ENCODE measurements at regions of chr1 and their contacts with region 1.

Region 1: DNA sequence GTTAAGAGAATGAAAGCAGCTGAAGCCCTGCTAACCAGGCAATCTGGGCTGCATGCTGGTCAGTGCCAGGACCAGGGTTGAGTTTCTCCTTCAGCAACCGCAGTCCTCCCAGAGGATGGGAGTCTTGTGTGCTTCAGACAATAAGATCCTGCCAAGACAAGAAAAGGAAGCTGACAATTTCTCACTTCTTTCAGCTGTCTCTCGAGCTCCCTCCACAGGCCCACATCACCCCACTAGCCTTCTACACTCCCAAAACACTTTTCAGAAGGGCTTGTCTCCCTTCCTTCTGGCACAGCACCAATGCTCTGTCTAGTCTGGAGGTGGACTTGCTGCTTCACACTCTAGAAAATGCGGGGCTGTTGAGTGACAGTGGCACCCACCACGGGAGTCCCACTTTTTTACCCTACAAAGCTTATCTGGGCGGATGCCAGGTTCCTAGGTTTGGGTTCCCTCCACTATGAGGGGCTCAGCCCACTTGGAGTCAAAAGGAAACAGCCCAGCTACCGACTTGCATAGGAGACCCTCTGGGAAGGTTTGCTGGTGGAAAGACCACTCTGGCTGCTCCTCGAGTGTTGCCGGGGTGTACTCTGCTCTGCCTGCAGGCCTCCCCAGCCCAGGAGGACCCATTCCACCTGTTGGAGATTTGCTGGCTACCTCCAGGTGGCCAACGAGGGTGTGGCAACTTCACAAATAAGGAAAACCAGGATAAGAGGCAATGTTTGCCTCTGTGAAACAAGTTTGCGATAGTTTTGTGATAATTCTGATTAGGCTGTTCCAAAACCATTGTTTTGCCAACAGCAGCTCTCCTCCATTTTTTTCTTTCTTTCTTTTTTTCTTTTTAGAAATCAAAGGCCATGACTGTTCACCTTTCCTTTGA is 68.9 kb downstream of the TENT5C start:
- DNase-seq: peak; percentile 41
- ATAC-seq: peak; percentile 80
- H3K4me3 Mint-ChIP-seq: no peak overlapping the region
- H3K27ac Mint-ChIP-seq: no peak overlapping the region
- H3K4me1 Mint-ChIP-seq: peaks cover 56% of the 10 kb centered on the region
- H3K27me3 Mint-ChIP-seq: no peaks in the 10 kb centered on the region
- CTCF ChIP-seq: no peak

Region 2: DNA sequence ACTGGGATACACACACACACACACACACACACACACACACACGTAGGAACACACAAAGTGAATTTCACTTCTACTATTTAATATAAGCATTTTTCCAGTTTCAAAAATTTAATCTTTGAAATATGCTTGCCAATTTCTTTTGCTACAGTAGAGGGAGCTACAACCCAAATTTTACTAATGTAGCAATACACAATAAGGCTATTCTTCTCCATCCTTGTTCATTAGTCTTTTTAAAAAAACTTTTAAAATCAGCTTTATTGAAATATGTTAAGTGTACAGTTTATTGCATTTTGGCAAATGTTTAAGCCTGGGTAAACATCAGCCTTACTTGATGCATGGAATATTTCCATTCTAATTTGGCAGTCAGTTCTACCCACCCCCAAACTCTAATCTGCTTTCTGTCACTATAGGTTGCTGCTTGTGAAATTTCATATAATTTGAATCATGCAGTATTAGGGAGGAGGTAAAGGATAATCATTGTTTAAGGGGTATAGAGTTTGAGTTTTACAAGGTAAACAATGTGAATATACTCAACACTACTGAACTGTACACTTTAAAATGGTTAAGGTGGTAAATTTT is 161.9 kb before region 1 on chr1:
- CTCF ChIA-PET with region 1: interaction called, 50 read pairs
- POLR2A ChIA-PET with region 1: no interaction called
- intact Hi-C with region 1: loop called (anchors 1 kb)
- DNase-seq: no peak
- ATAC-seq: no peak
- H3K4me3 Mint-ChIP-seq: no peak overlapping the region
- H3K27ac Mint-ChIP-seq: no peak overlapping the region
- H3K4me1 Mint-ChIP-seq: peaks cover 4% of the 10 kb centered on the region
- H3K27me3 Mint-ChIP-seq: no peaks in the 10 kb centered on the region
- CTCF ChIP-seq: no peak

Region 3: GRCh38 chr1:117605774-117606648 is 68.7 kb before region 1 on chr1 and contains the start of gene TENT5C:
- CTCF ChIA-PET with region 1: interaction called, 60 read pairs
- POLR2A ChIA-PET with region 1: interaction called, 1,269 read pairs
- intact Hi-C with region 1: loop called (anchors 1 kb)
- DNase-seq: peak; percentile 99
- ATAC-seq: peak; percentile 88
- H3K4me3 Mint-ChIP-seq: peak within 1 kb of the TSS; percentile 99
- H3K27ac Mint-ChIP-seq: peak within 1 kb of the TSS; percentile 99
- H3K4me1 Mint-ChIP-seq: peaks cover 50% of the 10 kb centered on the region
- H3K27me3 Mint-ChIP-seq: no peaks in the 10 kb centered on the region
- CTCF ChIP-seq: no peak
- total RNA-seq, gene TENT5C: 56.2 and 59.3 TPM in 2 replicates

Region 4: DNA sequence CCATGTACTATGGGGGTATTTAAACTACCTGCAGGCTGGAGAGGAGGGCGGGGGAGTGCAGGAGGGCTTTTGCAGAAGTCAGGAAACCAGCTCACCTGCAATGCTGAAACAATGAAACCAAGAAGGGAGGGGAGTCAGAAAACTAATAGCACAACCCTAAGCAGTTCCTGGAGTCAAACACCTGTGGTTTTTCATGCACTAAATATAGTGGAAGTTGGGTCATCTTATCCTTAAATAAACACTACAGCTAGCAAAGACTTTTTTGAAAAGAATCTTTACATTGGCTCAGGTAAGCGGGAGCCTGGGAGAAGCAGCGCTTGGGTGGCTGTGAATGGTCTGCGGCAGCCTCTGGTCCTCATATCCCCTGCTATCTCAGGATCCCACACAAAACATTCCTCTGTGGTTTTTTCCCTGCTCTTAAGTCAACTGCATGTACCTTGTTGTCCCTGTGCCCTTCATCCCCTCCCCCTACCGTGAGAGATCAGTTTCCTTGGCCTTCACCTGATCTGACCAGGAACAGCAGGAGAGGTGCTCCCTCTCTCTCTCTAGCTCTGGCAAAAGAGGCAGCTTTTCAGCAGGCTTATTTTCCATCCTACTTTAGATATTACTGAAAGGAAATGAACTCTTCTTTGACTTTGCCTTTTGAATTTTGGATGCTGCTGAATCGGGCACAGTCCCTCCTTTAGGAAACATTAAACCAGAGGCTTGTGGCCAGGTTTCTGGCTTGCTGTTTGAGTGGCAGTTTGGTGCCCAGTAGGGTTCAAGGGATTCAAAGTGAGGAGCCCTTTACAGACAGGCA is 42.3 kb before region 1 on chr1:
- CTCF ChIA-PET with region 1: interaction called, 11 read pairs
- POLR2A ChIA-PET with region 1: interaction called, 1,269 read pairs
- intact Hi-C with region 1: loop called (anchors 5 kb)
- DNase-seq: no peak
- ATAC-seq: no peak
- H3K4me3 Mint-ChIP-seq: peak overlapping the region; percentile 15
- H3K27ac Mint-ChIP-seq: no peak overlapping the region
- H3K4me1 Mint-ChIP-seq: peaks cover 95% of the 10 kb centered on the region
- H3K27me3 Mint-ChIP-seq: no peaks in the 10 kb centered on the region
- CTCF ChIP-seq: no peak

Region 5: GRCh38 chr1:117664314-117664713 is 10.4 kb before region 1 on chr1:
- CTCF ChIA-PET with region 1: interaction called, 15 read pairs
- POLR2A ChIA-PET with region 1: interaction called, 13 read pairs
- intact Hi-C with region 1: no loop called
- DNase-seq: no peak
- ATAC-seq: peak; percentile 87
- H3K4me3 Mint-ChIP-seq: peak overlapping the region; percentile 44
- H3K27ac Mint-ChIP-seq: peak overlapping the region; percentile 93
- H3K4me1 Mint-ChIP-seq: peaks cover 83% of the 10 kb centered on the region
- H3K27me3 Mint-ChIP-seq: no peaks in the 10 kb centered on the region
- CTCF ChIP-seq: no peak

Region 6: DNA sequence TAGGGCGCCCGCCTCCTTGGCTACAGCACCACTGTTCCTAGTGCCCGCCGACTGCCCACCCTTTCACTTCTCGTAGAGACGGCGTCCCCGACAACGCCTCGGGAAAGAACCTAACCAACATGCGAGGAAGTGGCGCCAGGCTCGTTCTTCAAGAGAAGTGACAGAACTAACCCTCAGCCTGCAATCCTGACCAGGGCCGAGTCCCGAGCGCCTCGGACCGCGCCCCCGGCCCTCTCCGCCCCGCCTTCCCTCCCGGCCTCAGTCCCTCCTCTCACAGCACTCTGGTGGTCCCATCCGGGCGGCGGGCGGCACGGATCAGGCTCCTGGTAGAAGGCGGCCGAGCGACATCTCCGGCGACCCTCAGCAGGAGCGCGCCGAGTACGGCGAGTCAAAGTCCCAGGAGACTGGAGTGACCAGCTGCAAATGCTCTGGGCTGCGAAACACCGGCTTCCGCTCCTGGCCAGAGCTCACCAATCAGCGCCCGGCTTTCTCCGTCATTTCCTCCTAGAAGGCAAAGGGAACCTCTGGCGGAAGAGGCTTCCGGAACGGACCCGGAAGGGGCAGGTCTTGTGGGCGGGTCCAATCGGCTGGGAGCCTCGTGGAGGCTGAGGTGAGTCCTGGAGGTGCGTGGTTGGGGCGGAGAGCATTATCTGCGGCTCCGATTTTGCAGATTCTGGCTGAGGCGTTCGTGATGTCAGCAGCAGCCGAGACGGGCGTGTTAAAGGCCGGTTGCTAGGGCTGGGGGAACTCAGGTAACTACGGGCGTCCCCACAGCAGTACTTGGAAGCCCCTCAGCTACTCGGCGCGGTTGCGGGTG is 254.6 kb after region 1 on chr1 and contains the starts of genes GDAP2 and WDR3:
- CTCF ChIA-PET with region 1: no interaction called
- POLR2A ChIA-PET with region 1: no interaction called
- intact Hi-C with region 1: loop called (anchors 5 kb)
- DNase-seq: peak; percentile 84
- ATAC-seq: peak; percentile 91
- H3K4me3 Mint-ChIP-seq: peak within 1 kb of the TSS; percentile 94
- H3K27ac Mint-ChIP-seq: peak within 1 kb of the TSS; percentile 91
- H3K4me1 Mint-ChIP-seq: peaks cover 57% of the 10 kb centered on the region
- H3K27me3 Mint-ChIP-seq: no peaks in the 10 kb centered on the region
- CTCF ChIP-seq: no peak
- total RNA-seq, gene GDAP2: 19.6 and 20.6 TPM in 2 replicates
- total RNA-seq, gene WDR3: 32.7 and 38.0 TPM in 2 replicates